Testis (tissue), 5 donors: ENCODE measurements at regions of chr9 and their contacts with region 1.

Region 1: GRCh38 chr9:33374634-33375213 is 27.6 kb downstream of the AQP7 start:
- DNase-seq: peak; percentile 94
- H3K4me3 ChIP-seq: peak overlapping the region in 1 of 2 donors; percentile 21
- H3K27ac ChIP-seq: peak overlapping the region; percentile 72 to 76
- H3K4me1 ChIP-seq: peaks cover 30% of the 10 kb centered on the region
- H3K27me3 ChIP-seq: no peaks in the 10 kb centered on the region
- CTCF ChIP-seq: peak; percentile 86 to 90 (median 87)
- POLR2A ChIP-seq: no peak

Region 2: DNA sequence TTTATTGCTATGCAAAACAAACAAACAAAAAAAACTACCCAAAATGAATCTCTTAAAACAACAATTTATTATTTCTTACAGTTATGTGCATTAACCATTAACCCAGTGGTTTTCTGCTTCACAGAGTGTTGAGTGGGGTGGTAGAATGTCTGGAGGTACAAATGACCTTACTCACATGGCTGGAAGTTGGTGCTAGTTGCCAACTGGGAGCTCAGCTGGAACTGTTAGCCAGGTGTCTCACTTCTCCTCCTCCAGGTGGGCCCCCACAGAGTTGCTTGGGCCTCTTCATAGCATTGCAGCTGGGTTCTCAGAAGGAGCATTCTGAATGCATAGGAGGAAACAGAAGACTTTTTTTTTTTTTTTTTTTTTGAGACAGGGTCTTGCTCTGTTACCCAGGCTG is 197.1 kb before region 1 on chr9:
- intact Hi-C with region 1: no loop called
- DNase-seq: no peak
- H3K4me3 ChIP-seq: no peak overlapping the region
- H3K27ac ChIP-seq: no peak overlapping the region
- H3K4me1 ChIP-seq: peaks cover 6% of the 10 kb centered on the region
- H3K27me3 ChIP-seq: no peaks in the 10 kb centered on the region
- CTCF ChIP-seq: no peak
- POLR2A ChIP-seq: no peak

Region 3: DNA sequence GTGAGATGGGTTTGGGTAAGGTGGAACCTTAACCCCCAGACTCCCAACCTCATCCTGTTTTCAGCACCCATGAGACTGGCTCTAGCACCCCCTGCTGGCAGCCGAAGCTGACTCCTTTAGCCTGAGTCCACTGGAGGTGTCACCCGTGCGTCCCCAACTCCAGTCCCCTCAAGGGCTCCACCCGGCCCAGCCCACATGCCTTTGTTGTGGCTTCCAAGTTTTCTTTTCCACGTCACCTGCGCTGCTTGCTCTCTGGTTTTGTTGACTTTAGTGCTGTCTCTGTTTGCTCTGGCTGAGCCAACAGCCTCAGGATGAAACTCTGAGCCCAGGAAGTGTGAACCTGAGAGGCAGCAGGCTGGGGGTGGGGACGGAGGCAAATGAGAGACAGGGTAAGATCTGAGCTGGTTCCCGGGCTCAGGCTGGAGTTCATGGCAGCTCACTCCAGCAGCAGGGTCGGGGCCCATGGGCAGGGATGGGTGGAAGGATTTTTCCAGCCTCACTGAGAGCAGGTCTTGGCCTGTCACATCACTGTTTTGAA is 40.8 kb after region 1 on chr9:
- intact Hi-C with region 1: loop called (anchors 5 kb)
- DNase-seq: peak; percentile 87
- H3K4me3 ChIP-seq: no peak overlapping the region
- H3K27ac ChIP-seq: no peak overlapping the region
- H3K4me1 ChIP-seq: no peaks in the 10 kb centered on the region
- H3K27me3 ChIP-seq: no peaks in the 10 kb centered on the region
- CTCF ChIP-seq: peak; percentile 58 to 77 (median 68)
- POLR2A ChIP-seq: no peak